MCF 10A (cell line): ENCODE measurements at regions of chr6 and their contacts with region 1.

Region 1: DNA sequence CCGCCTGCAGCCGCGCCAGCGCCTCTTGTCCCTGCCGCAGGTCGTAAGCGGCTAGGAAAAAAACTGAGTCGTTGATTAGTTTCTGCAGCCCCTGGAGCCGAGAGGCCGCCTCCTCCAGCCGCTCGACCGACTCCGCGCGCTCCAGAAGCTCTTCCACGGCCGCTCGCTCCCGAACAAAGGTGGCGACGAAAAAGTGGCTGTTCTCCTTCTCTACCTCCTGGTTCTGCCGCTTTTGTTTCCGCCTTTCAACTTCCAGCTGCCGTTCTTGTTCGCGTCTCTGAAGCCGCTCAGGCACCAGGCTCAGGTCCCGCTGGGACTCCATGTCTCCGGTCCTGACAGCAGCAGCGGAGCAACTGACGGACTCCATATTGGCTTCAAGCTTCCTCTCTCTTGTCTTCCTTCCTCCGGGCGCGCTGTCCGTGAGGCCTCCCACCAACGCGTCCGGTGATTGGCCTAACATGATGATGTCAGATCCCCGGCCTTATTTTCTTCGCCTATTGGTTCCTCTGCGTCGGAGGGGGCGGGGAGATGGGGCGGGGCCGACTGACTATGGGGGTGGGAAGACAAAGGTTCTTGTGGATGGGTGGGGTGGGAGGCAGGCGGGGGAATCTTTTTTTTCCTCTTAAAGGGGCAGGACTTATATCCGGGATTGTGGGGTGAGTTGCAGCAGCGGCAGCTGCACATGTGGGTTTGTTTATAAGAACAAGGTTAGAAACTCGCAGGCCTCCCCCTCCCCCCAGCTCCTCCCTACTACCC is at the start of gene TBCC:
- DNase-seq: peak; percentile 99
- H3K4me3 Mint-ChIP-seq: peak within 1 kb of the TSS; percentile 83
- H3K27ac Mint-ChIP-seq: peak within 1 kb of the TSS; percentile 95
- H3K4me1 Mint-ChIP-seq: peaks cover 24% of the 10 kb centered on the region
- H3K27me3 Mint-ChIP-seq: no peaks in the 10 kb centered on the region
- CTCF ChIP-seq: no peak
- total RNA-seq, gene TBCC: 13.7 and 19.4 TPM in 2 replicates

Region 2: GRCh38 chr6:41966961-41967311 is 778.9 kb before region 1 on chr6:
- CTCF ChIA-PET with region 1: no interaction called
- POLR2A ChIA-PET with region 1: no interaction called
- intact Hi-C with region 1: no loop called
- DNase-seq: peak; percentile 84
- H3K4me3 Mint-ChIP-seq: no peak overlapping the region
- H3K27ac Mint-ChIP-seq: peak overlapping the region; percentile 22
- H3K4me1 Mint-ChIP-seq: peaks cover 24% of the 10 kb centered on the region
- H3K27me3 Mint-ChIP-seq: no peaks in the 10 kb centered on the region
- CTCF ChIP-seq: no peak

Region 3: DNA sequence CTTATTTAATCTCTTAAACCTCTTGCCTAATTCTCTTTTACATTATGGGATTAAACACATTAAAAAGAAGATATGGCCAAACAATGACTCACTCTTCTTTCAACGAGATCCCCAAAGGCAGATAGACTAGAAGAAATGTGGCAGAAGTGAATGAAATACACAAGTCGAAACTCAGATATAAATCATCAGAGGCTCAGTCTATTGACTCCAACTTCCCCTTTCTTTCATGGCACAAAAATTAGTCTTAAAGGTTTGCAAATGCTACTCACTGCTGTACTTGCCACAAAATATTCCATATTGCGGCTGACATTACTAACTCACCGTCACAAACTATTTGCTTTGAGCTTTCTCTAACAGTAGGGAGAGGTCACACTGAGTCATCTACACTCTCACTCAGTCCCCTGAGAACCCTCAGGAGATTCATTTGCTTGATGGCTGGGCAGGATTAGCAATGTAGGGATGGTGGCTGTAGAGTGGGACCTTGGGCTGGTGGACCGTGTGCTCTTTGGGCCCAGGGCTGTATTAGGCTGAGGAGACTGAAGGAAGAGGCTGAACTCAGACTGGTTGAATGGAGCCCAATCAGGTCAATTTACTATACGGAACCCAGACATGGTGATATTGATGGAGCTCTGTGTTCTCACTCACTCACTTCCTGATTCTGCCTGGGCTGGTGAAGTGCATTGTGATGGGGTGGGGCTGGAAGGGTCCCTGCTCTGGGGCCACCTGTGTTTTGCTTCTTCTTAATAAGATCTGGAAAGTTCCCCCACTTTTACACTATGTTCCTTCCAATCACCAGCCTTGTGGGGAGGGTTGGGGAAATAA is 224.9 kb before region 1 on chr6:
- CTCF ChIA-PET with region 1: no interaction called
- POLR2A ChIA-PET with region 1: no interaction called
- intact Hi-C with region 1: no loop called
- DNase-seq: peak; percentile 23
- H3K4me3 Mint-ChIP-seq: no peak overlapping the region
- H3K27ac Mint-ChIP-seq: no peak overlapping the region
- H3K4me1 Mint-ChIP-seq: peaks cover 8% of the 10 kb centered on the region
- H3K27me3 Mint-ChIP-seq: no peaks in the 10 kb centered on the region
- CTCF ChIP-seq: no peak

Region 4: GRCh38 chr6:42692137-42692911 is 53.6 kb before region 1 on chr6:
- CTCF ChIA-PET with region 1: no interaction called
- POLR2A ChIA-PET with region 1: interaction called, 13 read pairs
- intact Hi-C with region 1: no loop called
- DNase-seq: peak; percentile 63
- H3K4me3 Mint-ChIP-seq: no peak overlapping the region
- H3K27ac Mint-ChIP-seq: peak overlapping the region; percentile 39
- H3K4me1 Mint-ChIP-seq: peaks cover 19% of the 10 kb centered on the region
- H3K27me3 Mint-ChIP-seq: no peaks in the 10 kb centered on the region
- CTCF ChIP-seq: no peak

Region 5: GRCh38 chr6:42766141-42766670 is 20.3 kb after region 1 on chr6:
- CTCF ChIA-PET with region 1: interaction called, 6 read pairs
- POLR2A ChIA-PET with region 1: interaction called, 37 read pairs
- intact Hi-C with region 1: no loop called
- DNase-seq: peak; percentile 61
- H3K4me3 Mint-ChIP-seq: no peak overlapping the region
- H3K27ac Mint-ChIP-seq: peak overlapping the region; percentile 79
- H3K4me1 Mint-ChIP-seq: peaks cover 11% of the 10 kb centered on the region
- H3K27me3 Mint-ChIP-seq: no peaks in the 10 kb centered on the region
- CTCF ChIP-seq: no peak

Region 6: DNA sequence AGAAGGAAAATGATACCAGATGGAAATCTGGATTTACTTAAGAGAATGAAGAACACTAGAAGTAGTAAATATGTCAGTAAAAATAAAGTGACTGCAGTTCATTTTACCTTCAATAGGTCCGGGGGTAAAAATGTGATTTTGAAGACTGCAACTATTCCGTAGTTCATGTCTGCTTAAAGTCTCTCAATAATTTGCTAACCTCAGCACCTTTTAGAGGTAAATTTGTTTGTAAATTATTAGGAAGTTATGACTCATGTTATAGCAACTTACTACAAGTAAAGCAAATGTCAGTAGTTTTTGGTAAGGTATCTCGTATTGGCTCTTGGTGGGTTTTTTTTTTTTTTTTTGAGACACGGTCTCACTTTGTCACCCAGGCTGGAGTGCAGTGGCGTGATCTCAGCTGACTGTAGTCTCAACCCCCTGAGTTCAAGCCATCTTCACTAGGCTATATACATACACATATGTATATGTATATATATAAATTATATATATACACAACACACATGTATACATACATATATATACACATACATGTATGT is 68.1 kb after region 1 on chr6:
- CTCF ChIA-PET with region 1: no interaction called
- POLR2A ChIA-PET with region 1: no interaction called
- intact Hi-C with region 1: no loop called
- DNase-seq: no peak
- H3K4me3 Mint-ChIP-seq: no peak overlapping the region
- H3K27ac Mint-ChIP-seq: no peak overlapping the region
- H3K4me1 Mint-ChIP-seq: no peaks in the 10 kb centered on the region
- H3K27me3 Mint-ChIP-seq: no peaks in the 10 kb centered on the region
- CTCF ChIP-seq: no peak

Region 7: GRCh38 chr6:42890311-42891198 is 144.7 kb after region 1 on chr6:
- CTCF ChIA-PET with region 1: no interaction called
- POLR2A ChIA-PET with region 1: interaction called, 43 read pairs
- intact Hi-C with region 1: no loop called
- DNase-seq: peak; percentile 98
- H3K4me3 Mint-ChIP-seq: peak overlapping the region; percentile 89
- H3K27ac Mint-ChIP-seq: peak overlapping the region; percentile 80
- H3K4me1 Mint-ChIP-seq: no peaks in the 10 kb centered on the region
- H3K27me3 Mint-ChIP-seq: no peaks in the 10 kb centered on the region
- CTCF ChIP-seq: no peak